CD8-positive, alpha-beta T cell (primary cell): ENCODE measurements at regions of chr4 and their contacts with region 1.

Region 1: GRCh38 chr4:81069706-81070331 is 39.3 kb downstream of the BMP3 start:
- DNase-seq: peak; percentile 8 to 78 (median 53)
- ATAC-seq: peak; percentile 93
- H3K4me3 ChIP-seq: no peak overlapping the region
- H3K4me3 Mint-ChIP-seq: no peak overlapping the region
- H3K27ac ChIP-seq: no peak overlapping the region
- H3K27ac Mint-ChIP-seq: no peak overlapping the region
- H3K4me1 ChIP-seq: no peaks in the 10 kb centered on the region
- H3K4me1 Mint-ChIP-seq: no peaks in the 10 kb centered on the region
- H3K27me3 ChIP-seq: no peaks in the 10 kb centered on the region
- H3K27me3 Mint-ChIP-seq: peaks cover 18% of the 10 kb centered on the region
- CTCF ChIP-seq: peak; percentile 98

Region 2: DNA sequence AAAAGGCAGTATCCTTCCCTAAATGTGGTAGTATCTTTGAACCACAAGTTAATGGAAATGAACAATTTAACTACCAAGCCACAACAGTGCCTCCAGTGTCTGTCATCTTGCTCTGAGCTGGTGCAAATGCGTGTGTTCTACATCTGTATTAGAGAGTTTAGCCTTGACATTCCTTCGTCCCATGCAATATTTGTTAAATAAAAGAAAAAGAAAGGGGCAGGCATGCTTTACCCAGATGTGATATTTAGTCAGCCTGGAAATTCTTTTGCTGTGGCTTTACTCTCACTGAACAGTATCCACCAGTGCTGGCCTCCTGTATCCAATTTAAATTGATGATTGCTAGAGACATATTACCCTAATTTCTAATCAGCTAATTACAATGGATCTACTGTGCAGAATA is 423.8 kb before region 1 on chr4:
- CTCF ChIA-PET with region 1: no interaction called
- POLR2A ChIA-PET with region 1: no interaction called
- intact Hi-C with region 1: no loop called
- DNase-seq: no peak
- ATAC-seq: no peak
- H3K4me3 ChIP-seq: no peak overlapping the region
- H3K4me3 Mint-ChIP-seq: no peak overlapping the region
- H3K27ac ChIP-seq: no peak overlapping the region
- H3K27ac Mint-ChIP-seq: no peak overlapping the region
- H3K4me1 ChIP-seq: no peaks in the 10 kb centered on the region
- H3K4me1 Mint-ChIP-seq: no peaks in the 10 kb centered on the region
- H3K27me3 ChIP-seq: no peaks in the 10 kb centered on the region
- H3K27me3 Mint-ChIP-seq: no peaks in the 10 kb centered on the region
- CTCF ChIP-seq: no peak

Region 3: DNA sequence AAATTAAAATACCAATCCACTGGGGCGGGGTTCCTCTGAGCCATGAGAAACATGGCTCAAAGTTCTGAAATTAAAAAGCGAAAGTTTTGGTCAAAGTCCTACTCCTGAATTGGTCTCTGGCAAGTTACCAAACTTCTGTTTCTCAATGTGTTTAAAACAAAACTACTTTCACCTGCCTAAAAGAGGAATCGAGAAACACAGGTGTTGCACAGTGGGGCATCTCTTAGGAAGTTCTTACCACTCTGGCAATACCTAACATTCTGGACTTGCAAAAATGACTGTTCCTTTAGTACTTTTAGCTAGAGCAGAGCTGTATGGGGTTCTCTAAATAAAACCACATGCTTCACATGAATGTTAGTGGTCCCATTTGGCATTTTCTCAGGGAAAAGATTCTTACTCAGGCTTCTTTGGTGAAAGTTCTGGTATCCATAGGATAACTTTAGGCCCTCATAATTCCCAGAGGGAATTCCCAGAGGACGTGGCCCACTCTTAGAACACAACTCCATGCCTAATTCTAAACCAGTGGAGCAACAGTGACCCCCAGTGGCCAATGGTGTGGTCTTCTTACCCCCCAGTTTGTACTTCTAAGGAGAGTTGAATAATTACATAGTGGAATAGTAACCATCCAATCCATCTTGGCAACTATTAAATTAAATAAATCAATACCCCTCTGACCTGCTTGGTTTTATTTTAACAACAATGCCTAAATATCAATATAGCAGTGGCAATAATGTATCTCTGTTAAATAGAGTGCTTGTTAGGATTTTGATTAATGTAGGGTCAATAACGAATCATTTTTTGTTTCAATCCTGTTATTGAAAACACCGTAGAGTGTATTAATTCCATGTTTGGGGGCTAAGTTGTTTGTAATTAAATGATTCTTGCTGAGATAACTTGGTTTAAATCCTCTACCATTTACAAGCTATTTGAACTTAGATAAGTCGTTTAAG is 17.4 kb before region 1 on chr4:
- CTCF ChIA-PET with region 1: interaction called, 28 read pairs
- POLR2A ChIA-PET with region 1: no interaction called
- intact Hi-C with region 1: no loop called
- DNase-seq: peak; percentile 14 to 73 (median 48)
- ATAC-seq: peak; percentile 42
- H3K4me3 ChIP-seq: no peak overlapping the region
- H3K4me3 Mint-ChIP-seq: no peak overlapping the region
- H3K27ac ChIP-seq: no peak overlapping the region
- H3K27ac Mint-ChIP-seq: no peak overlapping the region
- H3K4me1 ChIP-seq: no peaks in the 10 kb centered on the region
- H3K4me1 Mint-ChIP-seq: no peaks in the 10 kb centered on the region
- H3K27me3 ChIP-seq: no peaks in the 10 kb centered on the region
- H3K27me3 Mint-ChIP-seq: peaks cover 2% of the 10 kb centered on the region
- CTCF ChIP-seq: peak; percentile 45

Region 4: GRCh38 chr4:81084029-81084428 is 14.2 kb after region 1 on chr4:
- CTCF ChIA-PET with region 1: interaction called, 15 read pairs
- POLR2A ChIA-PET with region 1: no interaction called
- intact Hi-C with region 1: no loop called
- DNase-seq: peak in 1 of 9 experiments; percentile 6
- ATAC-seq: no peak
- H3K4me3 ChIP-seq: no peak overlapping the region
- H3K4me3 Mint-ChIP-seq: no peak overlapping the region
- H3K27ac ChIP-seq: no peak overlapping the region
- H3K27ac Mint-ChIP-seq: no peak overlapping the region
- H3K4me1 ChIP-seq: no peaks in the 10 kb centered on the region
- H3K4me1 Mint-ChIP-seq: no peaks in the 10 kb centered on the region
- H3K27me3 ChIP-seq: no peaks in the 10 kb centered on the region
- H3K27me3 Mint-ChIP-seq: peaks cover 6% of the 10 kb centered on the region
- CTCF ChIP-seq: no peak

Region 5: GRCh38 chr4:81260443-81261101 is 190.8 kb after region 1 on chr4:
- CTCF ChIA-PET with region 1: interaction called, 5 read pairs
- POLR2A ChIA-PET with region 1: no interaction called
- intact Hi-C with region 1: loop called (anchors 5 kb)
- DNase-seq: peak in 1 of 9 experiments; percentile 2
- ATAC-seq: no peak
- H3K4me3 ChIP-seq: no peak overlapping the region
- H3K4me3 Mint-ChIP-seq: no peak overlapping the region
- H3K27ac ChIP-seq: no peak overlapping the region
- H3K27ac Mint-ChIP-seq: no peak overlapping the region
- H3K4me1 ChIP-seq: no peaks in the 10 kb centered on the region
- H3K4me1 Mint-ChIP-seq: no peaks in the 10 kb centered on the region
- H3K27me3 ChIP-seq: no peaks in the 10 kb centered on the region
- H3K27me3 Mint-ChIP-seq: no peaks in the 10 kb centered on the region
- CTCF ChIP-seq: no peak

Region 6: DNA sequence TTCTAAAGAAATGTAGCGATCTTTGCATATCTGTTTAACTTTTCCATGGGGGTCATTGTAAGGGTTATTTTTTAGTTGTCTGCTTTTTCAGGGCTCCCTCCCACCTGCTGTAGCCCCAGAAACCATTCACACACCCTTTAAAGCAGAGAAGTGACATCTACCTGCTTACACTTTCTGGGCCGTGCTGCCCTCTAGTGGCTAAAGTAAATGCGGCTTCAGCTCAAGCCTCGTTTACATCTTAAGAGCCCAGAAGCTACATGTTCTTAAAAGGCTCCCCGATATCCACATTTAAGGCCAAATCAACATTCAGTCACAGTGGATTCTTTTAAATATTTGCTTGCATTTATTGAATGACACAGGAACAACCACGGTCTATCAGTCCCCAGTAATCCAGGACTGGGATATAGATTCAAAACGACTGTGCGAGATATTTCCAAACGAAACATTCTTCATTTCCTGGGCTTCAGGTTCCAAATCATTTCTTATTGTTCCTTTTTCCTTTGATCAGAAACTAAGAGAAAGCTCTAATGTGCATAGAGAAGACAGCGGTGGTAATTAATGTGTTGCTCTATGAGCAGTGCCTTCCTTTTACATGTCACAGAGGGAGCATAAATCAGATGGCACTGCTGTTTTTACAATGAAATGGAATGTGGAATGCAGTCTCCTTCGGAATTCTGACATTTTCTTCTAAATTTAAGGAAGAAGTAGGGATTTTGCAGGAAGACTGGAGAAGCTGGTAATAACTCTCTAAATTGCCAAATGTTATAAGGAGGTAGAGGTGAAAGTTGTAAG is 282.0 kb after region 1 on chr4:
- CTCF ChIA-PET with region 1: interaction called, 36 read pairs
- POLR2A ChIA-PET with region 1: no interaction called
- intact Hi-C with region 1: loop called (anchors 1 to 2 kb)
- DNase-seq: peak; percentile 18 to 73 (median 67)
- ATAC-seq: peak; percentile 57
- H3K4me3 ChIP-seq: no peak overlapping the region
- H3K4me3 Mint-ChIP-seq: no peak overlapping the region
- H3K27ac ChIP-seq: no peak overlapping the region
- H3K27ac Mint-ChIP-seq: no peak overlapping the region
- H3K4me1 ChIP-seq: no peaks in the 10 kb centered on the region
- H3K4me1 Mint-ChIP-seq: no peaks in the 10 kb centered on the region
- H3K27me3 ChIP-seq: no peaks in the 10 kb centered on the region
- H3K27me3 Mint-ChIP-seq: peaks cover 8% of the 10 kb centered on the region
- CTCF ChIP-seq: peak; percentile 89